ENCODE measurements at regions of chr14 and their contacts with region 1.

Region 1: DNA sequence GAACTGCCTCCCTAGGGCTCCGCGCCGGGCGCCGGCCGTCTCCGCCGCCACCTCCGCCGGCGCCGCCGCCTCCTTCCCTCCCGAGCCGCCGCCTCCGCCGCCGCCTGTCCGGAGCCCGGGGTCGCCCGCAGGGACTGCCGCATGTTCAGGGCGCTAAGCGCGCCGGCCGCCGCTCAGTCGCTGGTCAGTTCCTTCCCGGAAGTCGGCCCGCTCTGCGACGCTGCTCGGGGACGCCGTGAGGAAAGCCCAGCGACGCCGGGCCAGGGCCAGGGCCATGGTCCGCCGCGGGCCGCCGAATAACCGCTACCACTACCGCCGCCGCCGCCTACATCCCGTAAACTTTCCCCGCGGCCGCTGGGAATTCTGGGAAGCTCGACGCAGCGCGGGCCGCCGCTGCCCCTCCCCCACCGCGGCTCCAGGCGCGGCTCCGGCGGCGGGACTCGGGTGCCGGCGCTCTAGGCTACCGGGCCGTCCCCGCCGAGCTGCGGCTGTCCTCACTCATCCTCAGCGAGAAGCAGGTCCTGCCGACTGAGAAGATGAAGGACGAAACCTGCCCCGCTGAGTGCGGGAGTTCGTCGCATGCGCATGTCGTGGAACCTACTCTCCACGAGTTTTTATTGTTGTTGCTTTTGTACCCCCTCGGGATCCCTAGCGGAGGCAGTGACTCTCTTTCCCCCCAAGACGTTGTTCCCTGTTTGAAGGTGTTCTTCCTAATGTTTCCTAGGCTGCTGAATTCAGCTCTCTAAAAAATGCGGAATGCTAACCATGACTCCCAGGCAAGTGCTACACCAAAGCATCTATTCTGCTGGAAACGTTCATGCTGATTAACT is at the start of gene SAV1:
- DNase-seq: peak; percentile 88
- ATAC-seq: peak; percentile 77
- H3K4me3 ChIP-seq: peak within 1 kb of the TSS; percentile 95
- H3K27ac ChIP-seq: peak within 1 kb of the TSS; percentile 75
- H3K4me1 ChIP-seq: peaks cover 21% of the 10 kb centered on the region
- H3K27me3 ChIP-seq: no peaks in the 10 kb centered on the region
- CTCF ChIP-seq: no peak
- total RNA-seq, gene SAV1: 66.2 and 87.1 TPM in 2 replicates

Region 2: DNA sequence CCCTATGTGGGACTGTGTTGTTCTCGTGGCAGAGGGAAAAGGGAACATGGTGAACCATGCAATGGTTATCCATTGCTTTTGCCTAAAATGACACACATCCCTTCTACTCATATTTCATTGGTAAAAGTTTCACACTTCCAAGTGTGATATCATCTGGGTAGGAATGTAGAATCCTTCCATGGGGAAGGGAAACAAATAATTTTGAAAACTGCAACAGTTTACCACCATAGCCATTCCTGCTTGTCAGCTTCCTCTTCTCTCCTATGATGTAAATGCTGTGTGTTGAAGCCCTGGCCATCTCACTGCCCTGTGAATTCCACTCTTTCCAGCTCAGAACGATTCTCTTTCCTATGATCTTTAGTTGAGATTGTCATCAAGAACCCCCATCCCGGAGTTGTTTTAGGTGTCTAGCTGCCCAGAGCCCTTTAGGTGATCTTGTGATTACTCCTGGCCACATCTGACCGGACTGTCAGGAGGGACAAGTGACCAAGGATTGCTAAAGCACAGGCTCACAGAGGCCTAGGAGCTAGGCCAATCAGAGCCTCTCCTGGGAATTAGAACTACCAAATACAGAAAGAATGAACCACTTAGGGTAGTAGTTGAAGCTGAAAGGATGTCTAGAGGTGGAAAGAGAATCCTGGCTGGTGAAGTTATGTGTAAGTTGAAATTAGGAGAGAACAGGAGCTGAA is 636.5 kb before region 1 on chr14:
- CTCF ChIA-PET with region 1: no interaction called
- POLR2A ChIA-PET with region 1: no interaction called
- intact Hi-C with region 1: no loop called
- DNase-seq: no peak
- ATAC-seq: no peak
- H3K4me3 ChIP-seq: no peak overlapping the region
- H3K27ac ChIP-seq: no peak overlapping the region
- H3K4me1 ChIP-seq: no peaks in the 10 kb centered on the region
- H3K27me3 ChIP-seq: no peaks in the 10 kb centered on the region
- CTCF ChIP-seq: no peak

Region 3: GRCh38 chr14:50381008-50381407 is 287.2 kb before region 1 on chr14:
- CTCF ChIA-PET with region 1: no interaction called
- POLR2A ChIA-PET with region 1: interaction called, 41 read pairs
- intact Hi-C with region 1: no loop called
- DNase-seq: no peak
- ATAC-seq: no peak
- H3K4me3 ChIP-seq: no peak overlapping the region
- H3K27ac ChIP-seq: no peak overlapping the region
- H3K4me1 ChIP-seq: no peaks in the 10 kb centered on the region
- H3K27me3 ChIP-seq: no peaks in the 10 kb centered on the region
- CTCF ChIP-seq: no peak

Region 4: GRCh38 chr14:50520947-50521815 is 147.0 kb before region 1 on chr14:
- CTCF ChIA-PET with region 1: no interaction called
- POLR2A ChIA-PET with region 1: interaction called, 11 read pairs
- intact Hi-C with region 1: no loop called
- DNase-seq: peak; percentile 93
- ATAC-seq: peak; percentile 92
- H3K4me3 ChIP-seq: 0 out of 2 replicates have a peak overlapping the region, but pooled peaks have one; percentile 2
- H3K27ac ChIP-seq: peak overlapping the region; percentile 88
- H3K4me1 ChIP-seq: peaks cover 32% of the 10 kb centered on the region
- H3K27me3 ChIP-seq: no peaks in the 10 kb centered on the region
- CTCF ChIP-seq: no peak

Region 5: DNA sequence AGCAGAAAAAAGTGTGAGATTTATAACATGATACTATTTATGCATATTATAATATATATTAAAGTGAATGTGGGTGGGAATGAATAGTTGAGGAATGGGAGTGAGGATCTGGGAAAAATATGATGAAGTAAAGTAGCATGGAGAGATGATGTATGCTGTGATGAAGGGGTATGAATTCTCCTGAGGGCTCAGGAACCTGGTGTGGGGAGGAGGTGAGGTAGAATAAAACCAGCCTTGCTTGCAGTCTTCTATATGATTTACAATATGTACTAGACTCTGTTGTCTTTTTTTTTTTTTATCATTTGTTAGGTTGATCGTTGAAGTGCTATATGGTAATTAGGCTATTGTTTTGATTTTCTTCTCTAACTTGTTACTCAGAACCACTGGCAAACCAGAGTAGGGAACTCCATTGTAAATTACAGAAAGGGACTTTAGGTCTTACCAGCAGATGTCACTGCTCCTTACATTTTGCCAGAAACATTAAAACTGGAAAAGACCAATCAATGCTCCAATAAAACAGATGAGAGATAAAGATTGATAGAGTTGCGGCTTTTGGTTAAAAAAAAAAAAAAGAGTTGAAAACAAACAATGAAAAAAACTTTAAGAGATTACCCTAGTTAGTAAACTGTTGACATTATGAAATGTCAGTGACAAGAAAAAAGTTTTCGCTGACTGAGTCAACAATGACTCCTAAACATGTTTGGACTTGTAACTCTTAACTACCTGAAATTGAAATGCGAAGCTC is 68.3 kb before region 1 on chr14:
- CTCF ChIA-PET with region 1: interaction called, 5 read pairs
- POLR2A ChIA-PET with region 1: interaction called, 5 read pairs
- intact Hi-C with region 1: loop called (anchors 1 kb)
- DNase-seq: peak; percentile 86
- ATAC-seq: peak; percentile 66
- H3K4me3 ChIP-seq: peak overlapping the region; percentile 30; the same call in 1 of the 2 replicates
- H3K27ac ChIP-seq: peak overlapping the region; percentile 44
- H3K4me1 ChIP-seq: peaks cover 32% of the 10 kb centered on the region
- H3K27me3 ChIP-seq: no peaks in the 10 kb centered on the region
- CTCF ChIP-seq: peak; percentile 92

Region 6: GRCh38 chr14:50610465-50610864 is 57.7 kb before region 1 on chr14:
- CTCF ChIA-PET with region 1: no interaction called
- POLR2A ChIA-PET with region 1: no interaction called
- intact Hi-C with region 1: no loop called
- DNase-seq: no peak
- ATAC-seq: no peak
- H3K4me3 ChIP-seq: no peak overlapping the region
- H3K27ac ChIP-seq: no peak overlapping the region
- H3K4me1 ChIP-seq: no peaks in the 10 kb centered on the region
- H3K27me3 ChIP-seq: no peaks in the 10 kb centered on the region
- CTCF ChIP-seq: no peak

Region 7: GRCh38 chr14:50647282-50647681 is 20.9 kb before region 1 on chr14:
- CTCF ChIA-PET with region 1: no interaction called
- POLR2A ChIA-PET with region 1: interaction called, 5 read pairs
- intact Hi-C with region 1: loop called (anchors 2 kb)
- DNase-seq: no peak
- ATAC-seq: no peak
- H3K4me3 ChIP-seq: no peak overlapping the region
- H3K27ac ChIP-seq: peak overlapping the region; percentile 51
- H3K4me1 ChIP-seq: peaks cover 36% of the 10 kb centered on the region
- H3K27me3 ChIP-seq: no peaks in the 10 kb centered on the region
- CTCF ChIP-seq: no peak

Region 8: GRCh38 chr14:50741571-50741970 is 73.4 kb after region 1 on chr14:
- CTCF ChIA-PET with region 1: interaction called, 3 read pairs
- POLR2A ChIA-PET with region 1: no interaction called
- intact Hi-C with region 1: loop called (anchors 5 kb)
- DNase-seq: peak; percentile 95
- ATAC-seq: peak; percentile 93
- H3K4me3 ChIP-seq: peak overlapping the region; percentile 6; the same call in 1 of the 2 replicates
- H3K27ac ChIP-seq: peak overlapping the region; percentile 83
- H3K4me1 ChIP-seq: peaks cover 18% of the 10 kb centered on the region
- H3K27me3 ChIP-seq: no peaks in the 10 kb centered on the region
- CTCF ChIP-seq: no peak

Region 9: GRCh38 chr14:51293149-51293911 is 625.1 kb after region 1 on chr14:
- CTCF ChIA-PET with region 1: no interaction called
- POLR2A ChIA-PET with region 1: no interaction called
- intact Hi-C with region 1: no loop called
- DNase-seq: no peak
- ATAC-seq: no peak
- H3K4me3 ChIP-seq: no peak overlapping the region
- H3K27ac ChIP-seq: no peak overlapping the region
- H3K4me1 ChIP-seq: peaks cover 12% of the 10 kb centered on the region
- H3K27me3 ChIP-seq: no peaks in the 10 kb centered on the region
- CTCF ChIP-seq: no peak